ENCODE measurements at regions of chrX and their contacts with region 1.

Region 1: GRCh38 chrX:120144178-120144844 is 14.1 kb upstream of the RHOXF2 start:
- DNase-seq: no peak
- ATAC-seq: no peak
- H3K4me3 ChIP-seq: no peak overlapping the region
- H3K4me3 Mint-ChIP-seq: no peak overlapping the region
- H3K27ac ChIP-seq: no peak overlapping the region
- H3K27ac Mint-ChIP-seq: no peak overlapping the region
- H3K4me1 ChIP-seq: no peaks in the 10 kb centered on the region
- H3K4me1 Mint-ChIP-seq: peaks cover 15% of the 10 kb centered on the region
- H3K27me3 ChIP-seq: no peaks in the 10 kb centered on the region
- H3K27me3 Mint-ChIP-seq: no peaks in the 10 kb centered on the region
- CTCF ChIP-seq: no peak

Region 2: GRCh38 chrX:119784747-119785446 is 359.4 kb before region 1 on chrX:
- CTCF ChIA-PET with region 1: no interaction called
- POLR2A ChIA-PET with region 1: no interaction called
- intact Hi-C with region 1: loop called in 1 of 2 experiments (anchors 10 kb)
- DNase-seq: peak; percentile 2 to 67 (median 45)
- ATAC-seq: peak; percentile 79
- H3K4me3 ChIP-seq: no peak overlapping the region
- H3K4me3 Mint-ChIP-seq: no peak overlapping the region
- H3K27ac ChIP-seq: no peak overlapping the region
- H3K27ac Mint-ChIP-seq: no peak overlapping the region
- H3K4me1 ChIP-seq: peaks cover 23% of the 10 kb centered on the region
- H3K4me1 Mint-ChIP-seq: peaks cover 38% of the 10 kb centered on the region
- H3K27me3 ChIP-seq: no peaks in the 10 kb centered on the region
- H3K27me3 Mint-ChIP-seq: no peaks in the 10 kb centered on the region
- CTCF ChIP-seq: peak; percentile 47